Gastrocnemius medialis (tissue), 4 donors: ENCODE measurements at regions of chr2 and their contacts with region 1.

Region 1: GRCh38 chr2:42764096-42764495 is at the start of gene OXER1:
- DNase-seq: no peak
- ATAC-seq: no peak
- H3K4me3 ChIP-seq: no peak within 1 kb of the TSS
- H3K27ac ChIP-seq: no peak within 1 kb of the TSS
- H3K4me1 ChIP-seq: no peaks in the 10 kb centered on the region
- H3K27me3 ChIP-seq: no peaks in the 10 kb centered on the region
- CTCF ChIP-seq: no peak
- POLR2A ChIP-seq: no peak
- total RNA-seq, gene OXER1: 0.56 TPM in 1 of 4 donors, not detected in the others

Region 2: DNA sequence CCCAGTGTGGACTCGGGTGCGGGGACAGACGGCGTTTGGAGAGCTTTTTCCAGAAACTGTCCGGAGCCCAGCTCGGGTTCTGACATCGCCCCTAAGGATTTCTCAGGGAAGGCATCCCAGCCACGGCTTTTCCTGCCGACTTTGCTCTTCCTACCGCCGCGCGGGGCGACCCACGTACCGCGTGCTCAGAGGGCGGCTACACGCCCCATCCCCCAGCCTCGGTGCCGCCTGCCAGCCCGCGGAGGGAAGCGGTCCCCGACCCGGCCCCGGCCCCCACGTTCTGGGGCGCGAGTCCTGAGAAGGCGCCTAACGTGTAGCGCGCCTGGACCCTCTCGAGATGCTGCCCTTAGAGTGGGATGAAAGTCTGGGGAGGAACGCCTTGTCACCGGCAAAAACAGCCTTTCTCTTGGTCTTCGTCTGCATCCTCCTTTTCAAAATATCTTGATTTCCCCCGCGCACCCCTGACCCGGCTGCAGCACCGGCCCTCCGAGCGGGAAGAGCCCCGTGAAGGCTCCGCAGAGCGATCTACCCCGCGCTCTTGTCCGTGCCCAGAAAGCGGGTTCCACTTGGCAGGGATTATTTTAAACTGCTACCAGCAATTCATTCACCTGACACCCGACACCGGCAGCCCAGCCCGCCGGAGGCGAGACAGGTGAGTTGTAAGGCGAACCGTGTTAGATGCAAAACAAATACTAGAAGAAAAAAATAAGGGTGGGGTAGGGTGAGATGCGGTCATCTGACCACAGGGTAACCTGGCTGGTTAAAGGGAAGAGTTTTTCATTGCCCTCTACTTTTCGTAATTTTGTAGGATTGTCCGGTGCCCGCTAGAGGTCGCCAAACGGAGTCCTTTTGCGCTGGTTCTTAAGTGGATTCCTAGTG is 269.5 kb before region 1 on chr2:
- in situ Hi-C with region 1: no loop called
- intact Hi-C with region 1: loop called (anchors 10 kb)
- DNase-seq: peak; percentile 12 to 42
- ATAC-seq: peak; percentile 70 to 83
- H3K4me3 ChIP-seq: peak overlapping the region; percentile 55 to 64 (median 58)
- H3K27ac ChIP-seq: no peak overlapping the region
- H3K4me1 ChIP-seq: peaks cover 0 to 6% of the 10 kb centered on the region in 2 donors
- H3K27me3 ChIP-seq: peaks cover 22 to 30% (median 23%) of the 10 kb centered on the region in 3 donors
- CTCF ChIP-seq: peak; percentile 38 to 86 (median 66)
- POLR2A ChIP-seq: no peak